CD4-positive, alpha-beta T cell (primary cell): ENCODE measurements at regions of chr20 and their contacts with region 1.

Region 1: DNA sequence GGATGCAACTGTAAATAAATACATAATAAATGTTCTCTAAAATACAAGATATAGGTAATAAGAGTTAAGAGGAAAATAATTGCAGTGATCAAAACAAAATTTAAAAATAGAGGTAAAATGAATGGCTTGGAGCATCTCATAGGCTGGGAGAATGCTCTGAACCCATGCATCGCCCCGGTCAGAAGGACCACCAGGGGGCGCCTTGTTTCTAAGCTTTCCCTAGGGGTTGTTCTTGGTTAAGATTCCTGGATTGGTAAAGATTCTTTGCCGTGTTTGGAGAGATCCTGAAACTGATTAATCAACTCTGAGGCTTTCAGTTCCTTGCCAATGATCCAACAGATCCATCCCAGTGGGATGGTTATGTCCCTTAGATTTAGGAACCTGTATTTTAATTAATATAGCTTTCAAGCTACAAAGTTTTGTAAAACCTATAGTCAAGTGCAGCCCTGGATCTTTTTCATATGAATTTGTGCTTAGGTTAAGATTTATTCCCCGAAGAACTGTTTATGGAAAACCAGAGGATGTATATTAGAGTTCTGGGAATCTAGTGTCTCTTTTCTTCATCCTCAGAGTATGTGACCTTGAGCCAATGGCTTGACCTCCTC is 45.3 kb upstream of the PRELID3B start:
- DNase-seq: peak; percentile 76 to 94 (median 87)
- ATAC-seq: peak; percentile 91
- H3K4me3 ChIP-seq: no peak overlapping the region
- H3K4me3 Mint-ChIP-seq: no peak overlapping the region
- H3K27ac ChIP-seq: no peak overlapping the region
- H3K27ac Mint-ChIP-seq: peak overlapping the region; percentile 44
- H3K4me1 ChIP-seq: peaks cover 3% of the 10 kb centered on the region
- H3K4me1 Mint-ChIP-seq: peaks cover 7% of the 10 kb centered on the region
- H3K27me3 ChIP-seq: no peaks in the 10 kb centered on the region
- H3K27me3 Mint-ChIP-seq: no peaks in the 10 kb centered on the region
- CTCF ChIP-seq: peak; percentile 95

Region 2: DNA sequence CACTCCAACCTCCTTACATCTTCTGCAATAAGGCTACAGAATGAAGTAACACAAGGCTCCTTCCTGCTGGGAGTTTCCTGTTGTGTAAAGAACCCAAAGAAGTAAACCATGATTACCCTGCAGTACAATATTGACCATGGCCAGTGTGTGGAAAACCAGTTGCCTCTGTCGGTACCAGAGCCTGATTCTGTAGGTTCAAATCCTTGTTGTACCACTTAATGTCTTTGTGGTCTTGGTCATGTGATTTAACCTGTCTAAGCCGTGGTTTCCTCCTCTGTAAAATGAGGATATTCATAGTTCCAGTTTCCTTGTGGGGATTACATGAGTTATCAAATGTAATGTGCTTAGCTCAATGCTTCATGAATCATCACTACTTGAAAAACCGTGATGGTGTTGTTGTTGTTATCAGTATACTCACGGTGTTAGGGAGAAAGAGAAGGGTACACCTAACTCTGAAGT is 14.9 kb after region 1 on chr20:
- CTCF ChIA-PET with region 1: interaction called, 12 read pairs
- POLR2A ChIA-PET with region 1: no interaction called
- intact Hi-C with region 1: no loop called
- DNase-seq: peak in 1 of 14 experiments; percentile 24
- ATAC-seq: peak; percentile 32
- H3K4me3 ChIP-seq: no peak overlapping the region
- H3K4me3 Mint-ChIP-seq: no peak overlapping the region
- H3K27ac ChIP-seq: no peak overlapping the region
- H3K27ac Mint-ChIP-seq: no peak overlapping the region
- H3K4me1 ChIP-seq: peaks cover 9% of the 10 kb centered on the region
- H3K4me1 Mint-ChIP-seq: peaks cover 11% of the 10 kb centered on the region
- H3K27me3 ChIP-seq: no peaks in the 10 kb centered on the region
- H3K27me3 Mint-ChIP-seq: no peaks in the 10 kb centered on the region
- CTCF ChIP-seq: no peak

Region 3: GRCh38 chr20:59159493-59160376 is 71.8 kb after region 1 on chr20:
- CTCF ChIA-PET with region 1: interaction called, 18 read pairs
- POLR2A ChIA-PET with region 1: interaction called, 13 read pairs
- intact Hi-C with region 1: no loop called
- DNase-seq: peak; percentile 47 to 93 (median 66)
- ATAC-seq: peak; percentile 81
- H3K4me3 ChIP-seq: peak overlapping the region; percentile 70
- H3K4me3 Mint-ChIP-seq: peak overlapping the region; percentile 89
- H3K27ac ChIP-seq: peak overlapping the region; percentile 94 to 95
- H3K27ac Mint-ChIP-seq: peak overlapping the region; percentile 95
- H3K4me1 ChIP-seq: peaks cover 68% of the 10 kb centered on the region
- H3K4me1 Mint-ChIP-seq: peaks cover 98% of the 10 kb centered on the region
- H3K27me3 ChIP-seq: no peaks in the 10 kb centered on the region
- H3K27me3 Mint-ChIP-seq: no peaks in the 10 kb centered on the region
- CTCF ChIP-seq: no peak

Region 4: GRCh38 chr20:59207742-59208357 is 119.9 kb after region 1 on chr20:
- CTCF ChIA-PET with region 1: interaction called, 103 read pairs
- POLR2A ChIA-PET with region 1: interaction called, 18 read pairs
- intact Hi-C with region 1: loop called (anchors 1 kb)
- DNase-seq: peak; percentile 73 to 90 (median 81)
- ATAC-seq: peak; percentile 96
- H3K4me3 ChIP-seq: no peak overlapping the region
- H3K4me3 Mint-ChIP-seq: no peak overlapping the region
- H3K27ac ChIP-seq: no peak overlapping the region
- H3K27ac Mint-ChIP-seq: peak overlapping the region; percentile 77
- H3K4me1 ChIP-seq: peaks cover 27% of the 10 kb centered on the region
- H3K4me1 Mint-ChIP-seq: peaks cover 51% of the 10 kb centered on the region
- H3K27me3 ChIP-seq: no peaks in the 10 kb centered on the region
- H3K27me3 Mint-ChIP-seq: no peaks in the 10 kb centered on the region
- CTCF ChIP-seq: peak; percentile 78

Region 5: DNA sequence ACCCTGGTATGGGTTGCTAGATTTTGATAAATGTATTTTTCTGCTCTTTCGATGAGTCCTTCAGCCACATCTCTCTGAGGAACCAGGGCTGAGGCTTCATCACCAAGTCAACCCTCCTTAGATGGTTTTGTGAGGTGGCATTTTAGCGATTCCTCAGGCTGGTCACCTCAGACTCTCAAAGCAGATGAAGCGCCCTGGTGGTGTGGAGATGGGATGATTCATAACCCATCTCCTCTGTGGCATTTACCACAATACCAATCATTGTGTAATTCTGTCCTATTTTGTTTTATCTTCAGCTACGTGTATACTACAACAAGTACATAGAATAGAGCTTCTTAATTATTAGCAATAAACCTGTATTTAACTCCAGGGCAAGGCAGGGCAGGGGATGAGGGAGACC is 154.8 kb after region 1 on chr20:
- CTCF ChIA-PET with region 1: no interaction called
- POLR2A ChIA-PET with region 1: no interaction called
- intact Hi-C with region 1: no loop called
- DNase-seq: peak in 2 of 14 experiments; percentile 11 to 12
- ATAC-seq: peak; percentile 39
- H3K4me3 ChIP-seq: no peak overlapping the region
- H3K4me3 Mint-ChIP-seq: no peak overlapping the region
- H3K27ac ChIP-seq: no peak overlapping the region
- H3K27ac Mint-ChIP-seq: no peak overlapping the region
- H3K4me1 ChIP-seq: no peaks in the 10 kb centered on the region
- H3K4me1 Mint-ChIP-seq: peaks cover 8% of the 10 kb centered on the region
- H3K27me3 ChIP-seq: no peaks in the 10 kb centered on the region
- H3K27me3 Mint-ChIP-seq: no peaks in the 10 kb centered on the region
- CTCF ChIP-seq: no peak

Region 6: DNA sequence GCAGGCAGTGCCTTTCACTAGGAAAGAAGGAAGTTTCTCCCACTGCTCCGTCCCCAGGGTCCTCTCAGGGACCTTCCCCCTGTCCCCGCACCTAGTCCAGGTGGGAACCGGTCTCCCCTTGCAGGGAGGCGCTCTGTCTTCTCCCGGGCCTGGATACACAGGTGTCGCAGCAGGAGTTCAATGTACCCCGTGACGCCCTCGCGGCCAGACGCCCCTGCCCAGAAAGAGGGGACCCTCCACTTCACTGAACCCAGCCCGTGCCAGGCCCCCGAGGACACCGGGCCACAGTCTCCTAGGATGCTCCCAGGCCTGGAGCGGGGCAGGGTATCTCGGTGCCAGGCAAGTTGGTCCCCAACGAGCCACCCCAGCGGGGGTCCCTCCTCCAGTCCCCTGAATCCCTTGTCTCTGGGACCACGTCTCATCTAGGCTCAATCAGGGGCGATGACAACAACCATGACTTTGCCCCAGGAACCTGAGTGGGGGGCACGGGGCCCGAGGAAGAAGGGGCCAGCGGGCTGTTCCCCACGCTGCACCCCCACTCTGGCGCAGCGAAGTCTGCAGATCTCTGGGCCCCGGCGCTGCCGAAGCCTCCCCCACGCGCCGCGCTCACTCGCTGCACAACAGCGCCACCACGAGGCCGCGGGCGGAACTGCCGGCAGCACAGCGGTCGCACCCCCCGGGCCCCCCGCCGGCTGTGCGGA is 315.5 kb after region 1 on chr20:
- CTCF ChIA-PET with region 1: interaction called, 4 read pairs
- POLR2A ChIA-PET with region 1: interaction called, 3 read pairs
- intact Hi-C with region 1: loop called (anchors 1 kb)
- DNase-seq: peak; percentile 52 to 83 (median 72)
- ATAC-seq: peak; percentile 71
- H3K4me3 ChIP-seq: peak overlapping the region; percentile 25
- H3K4me3 Mint-ChIP-seq: peak overlapping the region; percentile 76
- H3K27ac ChIP-seq: no peak overlapping the region
- H3K27ac Mint-ChIP-seq: no peak overlapping the region
- H3K4me1 ChIP-seq: peaks cover 21% of the 10 kb centered on the region
- H3K4me1 Mint-ChIP-seq: no peaks in the 10 kb centered on the region
- H3K27me3 ChIP-seq: peaks cover 27 to 41% of the 10 kb centered on the region in 2 experiments
- H3K27me3 Mint-ChIP-seq: no peaks in the 10 kb centered on the region
- CTCF ChIP-seq: peak; percentile 99